ENCODE measurements at regions of chr12 and their contacts with region 1.

Region 1: GRCh38 chr12:97984974-97985580 is 522.5 kb downstream of the RMST start:
- DNase-seq: no peak
- ATAC-seq: no peak
- H3K4me3 ChIP-seq: no peak overlapping the region
- H3K27ac ChIP-seq: no peak overlapping the region
- H3K4me1 ChIP-seq: peaks cover 0 to 4% (median 0%) of the 10 kb centered on the region in 12 donors
- H3K27me3 ChIP-seq: no peaks in the 10 kb centered on the region
- CTCF ChIP-seq: no peak
- POLR2A ChIP-seq: no peak

Region 2: DNA sequence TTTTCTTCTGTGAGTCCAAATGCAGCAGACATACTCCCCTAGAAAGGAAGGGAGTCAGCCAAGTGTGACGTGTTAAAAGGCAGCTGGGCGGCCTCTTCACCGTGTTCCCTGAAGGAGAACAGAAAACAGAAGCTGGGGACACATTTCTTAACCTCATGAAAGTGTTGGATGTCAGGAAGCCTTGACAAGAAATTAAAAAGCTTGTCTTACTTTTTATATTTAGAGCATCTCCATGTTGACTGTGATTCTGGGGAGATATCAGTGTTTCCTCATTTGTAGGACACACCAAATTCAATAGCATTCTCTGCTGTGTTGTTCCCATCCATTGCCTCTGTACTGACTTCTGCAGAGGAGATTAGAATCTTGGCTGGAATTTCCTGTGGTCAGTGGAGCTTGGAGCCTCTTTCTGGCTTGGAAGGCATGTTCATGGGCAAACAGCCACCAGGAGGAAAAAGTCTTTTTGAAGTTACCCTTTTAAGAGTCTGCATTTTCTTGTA is 428.7 kb before region 1 on chr12:
- intact Hi-C with region 1: loop called in 1 of 10 experiments (anchors 10 kb)
- DNase-seq: peak in 4 of 5 donors; percentile 18 to 38 (median 34)
- ATAC-seq: peak; percentile 67 to 89 (median 82)
- H3K4me3 ChIP-seq: peak overlapping the region in 1 of 12 donors; percentile 4
- H3K27ac ChIP-seq: peak overlapping the region in 10 of 12 donors; percentile 2 to 74 (median 52)
- H3K4me1 ChIP-seq: peaks cover 0 to 12% (median 0%) of the 10 kb centered on the region in 12 donors
- H3K27me3 ChIP-seq: no peaks in the 10 kb centered on the region
- CTCF ChIP-seq: peak in 1 of 12 donors; percentile 11
- POLR2A ChIP-seq: no peak

Region 3: GRCh38 chr12:97794375-97794774 is 190.7 kb before region 1 on chr12:
- intact Hi-C with region 1: no loop called
- DNase-seq: no peak
- ATAC-seq: no peak
- H3K4me3 ChIP-seq: no peak overlapping the region
- H3K27ac ChIP-seq: no peak overlapping the region
- H3K4me1 ChIP-seq: no peaks in the 10 kb centered on the region
- H3K27me3 ChIP-seq: no peaks in the 10 kb centered on the region
- CTCF ChIP-seq: no peak
- POLR2A ChIP-seq: no peak